Mucosa of descending colon (tissue), 3 donors: ENCODE measurements at regions of chr2 and their contacts with region 1.

Region 1: DNA sequence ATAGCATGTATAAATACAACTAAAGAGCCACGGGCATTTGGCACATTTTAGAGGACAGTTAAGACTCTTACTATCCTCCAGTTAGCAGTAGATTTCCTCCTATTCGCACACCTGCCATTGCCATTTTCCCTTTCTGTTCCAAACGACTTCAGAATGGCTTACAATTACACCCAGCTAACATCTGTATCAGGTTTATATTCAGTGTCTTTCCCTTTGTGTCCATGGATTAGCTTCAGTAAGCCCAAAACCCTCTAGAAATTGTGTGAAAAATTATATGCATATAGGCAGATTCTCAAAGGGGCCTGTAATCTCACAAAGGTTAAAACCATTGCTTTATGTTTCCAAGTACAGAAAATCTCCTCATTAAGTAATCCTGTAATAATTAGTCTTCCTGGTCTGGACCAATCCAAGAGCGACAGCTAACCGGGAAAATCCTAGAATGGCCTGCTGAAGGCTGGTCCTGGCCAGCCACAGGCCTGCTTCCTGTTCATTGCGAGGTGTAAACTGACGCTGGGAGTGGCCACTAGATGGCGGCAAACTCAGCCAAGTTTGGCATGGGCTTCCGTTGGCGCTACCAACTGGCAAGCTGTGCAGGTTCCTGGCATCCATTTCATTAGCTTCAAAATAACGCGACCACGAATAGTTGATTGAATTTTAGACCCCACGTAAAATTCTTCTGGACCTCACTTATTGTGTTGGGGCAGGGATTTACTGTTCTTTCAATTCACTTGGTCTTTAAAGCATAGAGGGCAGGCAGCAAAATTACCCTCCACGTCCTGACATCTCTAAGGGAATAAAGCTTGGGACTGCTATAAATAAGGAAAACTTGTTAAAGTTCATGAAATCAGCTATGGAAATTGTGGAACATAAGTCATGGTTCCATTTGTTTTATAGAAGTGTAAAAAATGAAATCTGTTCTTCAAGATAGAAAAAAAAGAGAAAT is 17.1 kb downstream of the ARHGAP25 start:
- DNase-seq: peak; percentile 93 to 97 (median 95)
- ATAC-seq: peak; percentile 99
- H3K4me3 ChIP-seq: no peak overlapping the region
- H3K4me1 ChIP-seq: peaks cover 9% of the 10 kb centered on the region
- CTCF ChIP-seq: peak; percentile 89

Region 2: DNA sequence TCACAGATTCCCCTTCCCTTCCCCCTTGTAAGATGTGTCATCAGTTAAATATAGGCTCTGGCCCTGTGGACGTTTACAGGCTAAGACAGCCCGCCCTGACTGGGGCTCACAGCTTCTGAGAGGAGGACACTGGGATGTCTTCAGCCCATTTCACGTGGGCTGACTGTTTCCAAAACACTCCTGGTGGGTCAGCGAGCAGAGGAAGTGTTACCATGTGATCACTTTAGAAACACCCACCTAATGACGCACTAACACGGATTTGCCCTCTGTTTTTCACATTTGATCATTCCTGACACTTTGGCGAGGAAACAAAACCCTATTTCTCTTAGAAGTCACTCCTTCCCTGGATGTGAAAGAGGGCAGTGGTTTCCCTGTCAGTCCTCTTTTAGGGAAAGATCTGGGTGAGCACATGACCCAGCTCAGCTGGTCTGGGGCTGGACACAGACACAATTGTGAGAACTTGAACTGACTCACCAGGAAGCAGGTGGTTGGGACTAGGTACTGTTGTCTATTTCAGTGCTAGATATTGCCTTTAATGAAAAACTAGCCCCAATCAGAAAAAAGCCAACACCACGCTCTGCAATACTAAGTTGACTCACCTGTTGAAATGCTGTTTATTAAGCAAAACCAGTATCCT is 80.7 kb after region 1 on chr2:
- intact Hi-C with region 1: loop called (anchors 10 kb)
- DNase-seq: peak; percentile 41 to 65 (median 54)
- ATAC-seq: peak; percentile 45
- H3K4me3 ChIP-seq: no peak overlapping the region
- H3K4me1 ChIP-seq: peaks cover 17% of the 10 kb centered on the region
- CTCF ChIP-seq: no peak

Region 3: DNA sequence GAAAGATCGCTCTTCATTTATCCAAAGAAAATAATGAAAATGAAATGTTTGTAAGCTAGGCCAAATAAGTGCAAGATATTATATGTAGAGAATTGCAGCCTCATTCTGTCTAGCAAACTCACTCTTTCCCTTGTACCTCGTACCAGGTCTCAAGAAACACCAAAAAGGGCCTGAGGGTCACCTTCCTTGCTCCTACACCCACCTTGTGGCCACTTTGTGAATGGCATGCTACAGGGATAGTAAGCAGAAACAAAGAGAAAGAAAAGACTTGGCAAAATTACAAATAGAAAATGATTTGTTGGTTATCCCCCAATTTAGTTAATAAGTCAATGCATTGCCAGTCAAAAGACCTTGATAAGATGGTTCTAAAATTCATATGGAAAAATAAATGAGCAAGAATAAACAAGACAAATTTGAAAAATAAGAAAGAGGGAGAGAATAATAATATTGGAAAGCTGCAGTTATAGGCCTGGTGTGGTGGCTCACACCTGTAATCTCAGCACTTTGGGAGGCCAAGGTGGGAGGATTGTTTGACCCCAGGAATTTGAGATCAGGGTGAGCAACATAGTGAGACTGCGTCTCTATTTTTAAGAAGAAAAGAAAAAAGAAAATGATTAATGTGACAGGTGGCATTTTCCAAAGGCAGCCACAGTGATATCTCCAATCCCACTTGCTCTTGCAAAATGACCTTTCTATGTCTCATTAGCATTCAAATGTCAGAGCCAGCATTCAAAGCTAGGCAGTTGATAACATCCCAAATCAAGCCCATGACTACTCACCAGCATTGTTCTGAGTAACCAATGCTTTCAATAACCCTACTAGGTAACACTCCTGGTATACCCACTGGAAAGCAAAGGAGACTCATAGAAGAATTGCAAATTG is 158.4 kb after region 1 on chr2:
- intact Hi-C with region 1: loop called in 1 of 2 experiments (anchors 2 kb)
- DNase-seq: peak in 2 of 3 donors; percentile 55 to 91
- ATAC-seq: peak; percentile 63
- H3K4me3 ChIP-seq: no peak overlapping the region
- H3K4me1 ChIP-seq: peaks cover 8% of the 10 kb centered on the region
- CTCF ChIP-seq: peak; percentile 80